Caco-2 (cell line): ENCODE measurements at regions of chr20 and their contacts with region 1.

Region 1: DNA sequence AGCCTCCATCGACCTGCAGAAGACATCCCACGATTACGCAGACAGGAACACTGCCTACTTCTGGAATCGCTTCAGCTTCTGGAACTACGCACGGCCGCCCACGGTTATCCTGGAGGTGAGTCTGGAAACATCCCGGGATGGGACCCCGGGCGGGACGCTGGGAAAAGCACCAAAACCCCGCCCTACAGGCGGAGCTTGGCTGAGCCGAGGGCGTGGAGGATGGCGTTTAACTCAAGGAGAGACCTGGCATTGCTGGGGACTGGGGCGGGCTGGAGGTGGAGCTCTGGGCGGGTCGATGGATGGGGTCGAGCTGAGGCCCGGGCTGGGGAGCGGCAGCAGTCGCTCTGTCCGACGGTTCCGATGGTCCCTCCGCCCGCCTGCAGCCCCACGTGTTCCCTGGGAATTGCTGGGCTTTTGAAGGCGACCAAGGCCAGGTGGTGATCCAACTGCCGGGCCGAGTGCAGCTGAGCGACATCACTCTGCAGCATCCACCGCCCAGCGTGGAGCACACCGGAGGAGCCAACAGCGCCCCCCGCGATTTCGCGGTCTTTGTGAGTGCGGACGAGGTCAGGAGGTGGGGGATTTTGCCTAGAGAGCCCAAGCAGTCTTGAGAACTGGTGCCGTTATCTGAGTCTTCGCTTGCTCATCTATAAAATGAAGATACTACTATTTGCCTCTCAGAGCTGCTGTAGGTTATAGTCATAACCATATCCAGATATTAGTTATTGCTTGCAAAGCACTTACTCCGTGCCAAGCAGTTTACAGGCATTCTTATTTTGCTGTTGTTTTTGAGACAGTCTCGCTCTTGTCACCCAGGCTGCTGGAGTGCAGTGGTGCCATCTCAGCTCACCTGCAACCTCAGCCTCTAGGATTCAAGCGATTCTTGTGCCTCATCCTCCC is 3.8 kb downstream of the SPAG4 start:
- DNase-seq: peak; percentile 98 to 99
- H3K4me3 ChIP-seq: peak overlapping the region; percentile 66
- H3K4me3 Mint-ChIP-seq: peak overlapping the region; percentile 98
- H3K27ac Mint-ChIP-seq: peak overlapping the region; percentile 73
- H3K4me1 ChIP-seq: peaks cover 5% of the 10 kb centered on the region; the same call in 1 of the 2 replicates
- H3K4me1 Mint-ChIP-seq: peaks cover 29% of the 10 kb centered on the region
- H3K27me3 ChIP-seq: no peaks in the 10 kb centered on the region
- H3K27me3 Mint-ChIP-seq: no peaks in the 10 kb centered on the region
- CTCF ChIP-seq: peak; percentile 94 to 99

Region 2: DNA sequence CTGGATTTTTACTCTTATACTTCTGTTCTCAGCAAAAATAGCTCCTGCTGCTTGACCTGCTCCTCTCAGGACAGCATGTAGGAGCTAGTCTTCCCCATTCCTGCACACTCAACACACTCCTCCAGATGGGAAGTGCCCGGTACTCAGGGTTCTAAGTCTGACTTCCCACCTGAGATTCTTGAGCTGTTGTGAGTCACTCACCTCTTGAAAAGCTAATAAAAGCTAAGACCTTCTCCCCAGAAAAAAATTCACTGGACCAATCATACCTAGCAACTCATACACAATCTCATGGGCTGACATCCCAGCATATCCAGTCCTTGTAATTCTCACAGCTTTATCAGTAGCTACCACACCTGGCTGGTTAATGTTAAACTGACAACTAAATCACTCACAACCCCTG is 580.3 kb before region 1 on chr20:
- CTCF ChIA-PET with region 1: no interaction called
- POLR2A ChIA-PET with region 1: no interaction called
- intact Hi-C with region 1: loop called (anchors 2 kb)
- DNase-seq: peak; percentile 89 to 95
- H3K4me3 ChIP-seq: no peak overlapping the region
- H3K4me3 Mint-ChIP-seq: peak overlapping the region; percentile 33
- H3K27ac Mint-ChIP-seq: peak overlapping the region; percentile 38
- H3K4me1 ChIP-seq: peaks cover 43% of the 10 kb centered on the region
- H3K4me1 Mint-ChIP-seq: peaks cover 46% of the 10 kb centered on the region
- H3K27me3 ChIP-seq: no peaks in the 10 kb centered on the region
- H3K27me3 Mint-ChIP-seq: no peaks in the 10 kb centered on the region
- CTCF ChIP-seq: no peak

Region 3: GRCh38 chr20:35511814-35512420 is 107.5 kb before region 1 on chr20:
- CTCF ChIA-PET with region 1: interaction called, 7 read pairs
- POLR2A ChIA-PET with region 1: no interaction called
- intact Hi-C with region 1: loop called (anchors 1 kb)
- DNase-seq: peak in 1 of 2 experiments; percentile 68
- H3K4me3 ChIP-seq: no peak overlapping the region
- H3K4me3 Mint-ChIP-seq: no peak overlapping the region
- H3K27ac Mint-ChIP-seq: no peak overlapping the region
- H3K4me1 ChIP-seq: no peaks in the 10 kb centered on the region
- H3K4me1 Mint-ChIP-seq: no peaks in the 10 kb centered on the region
- H3K27me3 ChIP-seq: no peaks in the 10 kb centered on the region
- H3K27me3 Mint-ChIP-seq: no peaks in the 10 kb centered on the region
- CTCF ChIP-seq: peak; percentile 88 to 92

Region 4: DNA sequence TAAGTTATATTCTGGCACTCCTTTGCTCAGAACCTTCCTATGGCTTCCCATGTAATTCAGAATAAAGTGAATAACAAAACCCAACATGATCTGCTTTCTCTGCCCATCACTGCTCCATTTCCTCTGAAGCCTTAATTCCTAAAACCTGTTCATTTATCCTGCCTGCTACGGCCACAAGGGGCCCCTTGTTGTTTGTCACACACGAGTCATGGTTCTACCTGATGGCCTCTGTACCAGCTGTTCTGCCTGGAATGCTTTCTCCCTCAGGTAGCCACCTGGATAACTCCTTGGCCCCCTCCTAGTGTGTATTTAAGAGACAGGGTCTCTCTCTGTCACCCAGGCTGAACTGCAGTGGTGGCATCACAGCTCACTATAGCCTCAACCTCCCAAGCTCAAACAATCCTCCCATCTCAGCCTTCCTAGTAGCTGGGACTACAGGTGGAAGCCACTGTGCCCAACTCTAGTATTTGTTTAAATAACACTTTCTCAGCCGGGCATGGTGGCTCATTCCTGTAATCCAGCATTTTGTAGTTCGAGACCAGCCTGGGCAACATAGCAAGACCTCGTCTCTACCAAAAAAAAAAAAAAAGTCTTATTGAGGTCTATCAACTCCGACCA is 50.7 kb before region 1 on chr20:
- CTCF ChIA-PET with region 1: interaction called, 17 read pairs
- POLR2A ChIA-PET with region 1: interaction called, 4 read pairs
- intact Hi-C with region 1: loop called (anchors 1 kb)
- DNase-seq: peak; percentile 80 to 81
- H3K4me3 ChIP-seq: no peak overlapping the region
- H3K4me3 Mint-ChIP-seq: no peak overlapping the region
- H3K27ac Mint-ChIP-seq: no peak overlapping the region
- H3K4me1 ChIP-seq: no peaks in the 10 kb centered on the region
- H3K4me1 Mint-ChIP-seq: peaks cover 15% of the 10 kb centered on the region
- H3K27me3 ChIP-seq: no peaks in the 10 kb centered on the region
- H3K27me3 Mint-ChIP-seq: peaks cover 3% of the 10 kb centered on the region
- CTCF ChIP-seq: peak; percentile 82 to 84

Region 5: GRCh38 chr20:35664544-35665221 is 45.2 kb after region 1 on chr20 and contains the starts of genes CPNE1 and RBM12:
- CTCF ChIA-PET with region 1: interaction called, 46 read pairs
- POLR2A ChIA-PET with region 1: interaction called, 37 read pairs
- intact Hi-C with region 1: loop called (anchors 1 kb)
- DNase-seq: peak; percentile 99
- H3K4me3 ChIP-seq: peak within 1 kb of the TSS; percentile 87
- H3K4me3 Mint-ChIP-seq: peak within 1 kb of the TSS; percentile 84
- H3K27ac Mint-ChIP-seq: peak within 1 kb of the TSS; percentile 96
- H3K4me1 ChIP-seq: peaks cover 30% of the 10 kb centered on the region
- H3K4me1 Mint-ChIP-seq: peaks cover 22% of the 10 kb centered on the region
- H3K27me3 ChIP-seq: no peaks in the 10 kb centered on the region
- H3K27me3 Mint-ChIP-seq: no peaks in the 10 kb centered on the region
- CTCF ChIP-seq: no peak
- total RNA-seq, gene CPNE1: 815 and 833 TPM in 2 replicates
- total RNA-seq, gene RBM12: 146 and 147 TPM in 2 replicates

Region 6: DNA sequence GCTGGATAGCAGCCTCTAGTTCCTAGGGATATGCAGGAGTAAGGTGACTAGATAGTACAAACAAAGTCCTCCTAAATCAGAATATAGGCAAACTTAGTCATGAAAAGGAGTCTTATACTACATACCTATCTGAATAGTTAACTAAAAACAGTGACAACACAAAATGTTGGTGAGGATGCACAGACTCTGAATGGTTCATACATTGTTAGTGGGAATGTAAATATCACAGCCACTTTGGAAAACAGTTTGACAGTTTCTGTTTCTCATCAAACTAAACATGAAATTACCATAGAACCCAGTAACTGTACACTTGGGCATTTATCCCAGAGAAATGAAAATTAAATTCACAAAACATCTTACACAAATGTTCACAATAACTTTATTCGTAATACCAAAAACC is 62.5 kb after region 1 on chr20:
- CTCF ChIA-PET with region 1: no interaction called
- POLR2A ChIA-PET with region 1: no interaction called
- intact Hi-C with region 1: no loop called
- DNase-seq: no peak
- H3K4me3 ChIP-seq: no peak overlapping the region
- H3K4me3 Mint-ChIP-seq: no peak overlapping the region
- H3K27ac Mint-ChIP-seq: no peak overlapping the region
- H3K4me1 ChIP-seq: no peaks in the 10 kb centered on the region
- H3K4me1 Mint-ChIP-seq: no peaks in the 10 kb centered on the region
- H3K27me3 ChIP-seq: no peaks in the 10 kb centered on the region
- H3K27me3 Mint-ChIP-seq: no peaks in the 10 kb centered on the region
- CTCF ChIP-seq: no peak

Region 7: DNA sequence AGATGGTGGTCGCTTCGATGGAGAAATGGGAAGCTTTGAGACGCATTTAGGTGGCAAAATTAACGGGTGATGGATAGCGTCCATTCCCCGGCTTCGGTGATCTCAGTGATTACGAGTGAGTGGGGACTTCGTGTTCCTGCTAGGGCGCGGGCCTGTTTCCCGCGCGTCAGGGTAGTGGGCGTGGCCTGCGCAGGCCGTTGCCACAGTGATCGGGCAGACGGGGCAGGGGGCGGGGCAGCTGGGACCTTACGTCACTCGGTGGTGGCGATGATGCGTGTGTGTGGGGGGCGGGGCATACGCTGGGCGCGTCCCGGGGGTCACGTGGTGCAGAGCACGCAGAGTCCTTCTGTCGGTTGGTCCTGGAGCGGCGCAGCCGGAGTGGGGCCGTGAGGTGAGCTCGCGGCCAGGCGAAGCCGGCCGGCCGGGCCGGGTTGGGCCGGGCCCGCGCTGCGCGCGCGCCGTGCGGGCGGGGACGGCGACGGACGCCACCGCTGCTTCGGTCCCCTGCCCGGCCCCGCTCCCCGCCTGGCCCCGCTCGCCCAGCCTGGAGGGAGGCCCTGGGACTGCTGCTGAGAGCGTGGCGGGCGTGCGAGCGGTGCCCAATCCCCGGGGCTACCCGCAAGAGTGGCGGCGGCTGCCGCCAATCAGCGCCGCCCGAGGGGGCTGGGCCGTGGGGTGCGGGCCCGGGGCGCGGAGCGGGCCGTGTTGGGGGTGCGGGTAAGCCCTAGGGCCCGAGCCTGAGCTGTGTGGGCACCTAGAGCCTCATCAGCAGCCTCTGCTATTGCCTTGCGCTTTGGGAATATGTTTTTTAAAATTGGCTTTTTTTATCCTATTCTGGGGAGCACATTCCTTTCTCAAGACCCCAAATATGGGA is 152.5 kb after region 1 on chr20 and contains the start of gene PHF20:
- CTCF ChIA-PET with region 1: interaction called, 4 read pairs
- POLR2A ChIA-PET with region 1: interaction called, 17 read pairs
- intact Hi-C with region 1: loop called (anchors 5 kb)
- DNase-seq: peak; percentile 100
- H3K4me3 ChIP-seq: peak within 1 kb of the TSS; percentile 73
- H3K4me3 Mint-ChIP-seq: peak within 1 kb of the TSS; percentile 80
- H3K27ac Mint-ChIP-seq: peak within 1 kb of the TSS; percentile 90
- H3K4me1 ChIP-seq: peaks cover 58% of the 10 kb centered on the region
- H3K4me1 Mint-ChIP-seq: peaks cover 54% of the 10 kb centered on the region
- H3K27me3 ChIP-seq: no peaks in the 10 kb centered on the region
- H3K27me3 Mint-ChIP-seq: no peaks in the 10 kb centered on the region
- CTCF ChIP-seq: no peak
- total RNA-seq, gene PHF20: 101 and 109 TPM in 2 replicates

Region 8: DNA sequence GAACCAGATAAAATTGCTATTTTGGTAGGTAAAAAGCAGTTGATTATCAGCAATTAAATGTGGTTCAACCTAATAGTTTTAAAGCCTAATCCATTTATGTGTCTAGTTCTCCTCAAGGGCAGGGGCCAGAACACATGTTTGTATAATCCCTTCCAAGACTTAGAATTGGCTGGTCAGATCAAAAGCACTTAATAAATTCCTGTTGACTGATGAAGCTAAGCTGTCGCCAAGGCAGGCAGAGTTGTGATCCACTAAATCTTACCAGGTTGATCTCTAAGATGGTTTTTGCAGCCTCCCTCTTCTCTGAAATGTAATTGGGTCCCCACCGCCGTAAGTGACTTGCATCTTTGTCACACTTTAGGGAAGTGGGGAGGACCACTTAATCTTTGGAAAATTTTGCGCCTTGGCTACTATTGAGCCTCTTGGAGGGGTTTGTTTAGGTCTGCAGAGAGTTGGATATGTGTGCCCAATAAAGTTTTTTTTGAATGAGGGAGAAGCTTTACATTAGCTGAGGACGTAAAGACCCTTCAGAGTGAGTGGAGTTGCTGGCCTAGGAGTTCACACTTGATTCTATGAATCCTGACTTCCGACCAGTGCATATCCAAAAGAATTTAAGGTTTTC is 218.2 kb after region 1 on chr20:
- CTCF ChIA-PET with region 1: no interaction called
- POLR2A ChIA-PET with region 1: no interaction called
- intact Hi-C with region 1: no loop called
- DNase-seq: no peak
- H3K4me3 ChIP-seq: no peak overlapping the region
- H3K4me3 Mint-ChIP-seq: no peak overlapping the region
- H3K27ac Mint-ChIP-seq: no peak overlapping the region
- H3K4me1 ChIP-seq: peaks cover 5% of the 10 kb centered on the region; the same call in 1 of the 2 replicates
- H3K4me1 Mint-ChIP-seq: peaks cover 6% of the 10 kb centered on the region
- H3K27me3 ChIP-seq: no peaks in the 10 kb centered on the region
- H3K27me3 Mint-ChIP-seq: no peaks in the 10 kb centered on the region
- CTCF ChIP-seq: no peak

Region 9: GRCh38 chr20:36439040-36439730 is 819.7 kb after region 1 on chr20:
- CTCF ChIA-PET with region 1: no interaction called
- POLR2A ChIA-PET with region 1: interaction called, 12 read pairs
- intact Hi-C with region 1: no loop called
- DNase-seq: peak; percentile 88 to 94
- H3K4me3 ChIP-seq: no peak overlapping the region
- H3K4me3 Mint-ChIP-seq: no peak overlapping the region
- H3K27ac Mint-ChIP-seq: no peak overlapping the region
- H3K4me1 ChIP-seq: peaks cover 3% of the 10 kb centered on the region; the same call in 1 of the 2 replicates
- H3K4me1 Mint-ChIP-seq: peaks cover 11% of the 10 kb centered on the region
- H3K27me3 ChIP-seq: no peaks in the 10 kb centered on the region
- H3K27me3 Mint-ChIP-seq: no peaks in the 10 kb centered on the region
- CTCF ChIP-seq: peak; percentile 99 to 100